B cell (primary cell): ENCODE measurements at regions of chr2 and their contacts with region 1.

Region 1: GRCh38 chr2:60439219-60439974 is 114.1 kb downstream of the BCL11A start:
- DNase-seq: peak; percentile 94
- ATAC-seq: peak; percentile 92
- H3K4me3 ChIP-seq: peak overlapping the region in 4 of 5 experiments; percentile 1 to 50 (median 31)
- H3K4me3 Mint-ChIP-seq: peak overlapping the region; percentile 88
- H3K27ac ChIP-seq: peak overlapping the region; percentile 88 to 90
- H3K27ac Mint-ChIP-seq: peak overlapping the region; percentile 100
- H3K4me1 ChIP-seq: peaks cover 75 to 81% of the 10 kb centered on the region in 2 donors
- H3K4me1 Mint-ChIP-seq: peaks cover 80% of the 10 kb centered on the region
- H3K27me3 ChIP-seq: no peaks in the 10 kb centered on the region
- H3K27me3 Mint-ChIP-seq: no peaks in the 10 kb centered on the region
- CTCF ChIP-seq: peak; percentile 84

Region 2: GRCh38 chr2:60213865-60214625 is 225.4 kb before region 1 on chr2:
- CTCF ChIA-PET with region 1: no interaction called
- POLR2A ChIA-PET with region 1: no interaction called
- intact Hi-C with region 1: no loop called
- DNase-seq: no peak
- ATAC-seq: no peak
- H3K4me3 ChIP-seq: no peak overlapping the region
- H3K4me3 Mint-ChIP-seq: no peak overlapping the region
- H3K27ac ChIP-seq: no peak overlapping the region
- H3K27ac Mint-ChIP-seq: no peak overlapping the region
- H3K4me1 ChIP-seq: no peaks in the 10 kb centered on the region
- H3K4me1 Mint-ChIP-seq: peaks cover 5% of the 10 kb centered on the region
- H3K27me3 ChIP-seq: no peaks in the 10 kb centered on the region
- H3K27me3 Mint-ChIP-seq: no peaks in the 10 kb centered on the region
- CTCF ChIP-seq: no peak

Region 3: GRCh38 chr2:60353406-60353800 is 86.0 kb before region 1 on chr2:
- CTCF ChIA-PET with region 1: interaction called, 42 read pairs
- POLR2A ChIA-PET with region 1: interaction called, 13 read pairs
- intact Hi-C with region 1: loop called (anchors 1 kb)
- DNase-seq: no peak
- ATAC-seq: peak; percentile 1
- H3K4me3 ChIP-seq: peak overlapping the region in 2 of 5 experiments; percentile 8 to 10
- H3K4me3 Mint-ChIP-seq: peak overlapping the region; percentile 54
- H3K27ac ChIP-seq: peak overlapping the region; percentile 95
- H3K27ac Mint-ChIP-seq: peak overlapping the region; percentile 99
- H3K4me1 ChIP-seq: peaks cover 98% of the 10 kb centered on the region in 2 donors
- H3K4me1 Mint-ChIP-seq: peaks cover 98% of the 10 kb centered on the region
- H3K27me3 ChIP-seq: no peaks in the 10 kb centered on the region
- H3K27me3 Mint-ChIP-seq: no peaks in the 10 kb centered on the region
- CTCF ChIP-seq: no peak

Region 4: DNA sequence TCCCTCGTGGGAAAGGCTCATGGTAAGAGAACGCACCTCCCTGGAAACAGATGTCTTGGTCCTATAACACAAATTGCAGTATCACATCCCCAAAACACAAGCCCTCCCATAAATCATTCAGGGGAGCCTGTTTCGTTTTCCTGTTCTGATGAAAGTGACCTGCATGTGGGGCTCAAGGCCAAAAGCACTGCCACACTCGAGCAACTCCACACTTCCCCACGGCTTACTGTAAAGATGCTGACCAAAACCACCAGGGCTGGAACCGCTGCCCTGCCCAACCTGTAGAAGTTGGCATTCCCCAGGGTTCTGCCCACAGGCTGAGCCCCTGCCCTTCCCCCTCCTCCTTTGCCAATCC is 25.6 kb before region 1 on chr2:
- CTCF ChIA-PET with region 1: interaction called, 4 read pairs
- POLR2A ChIA-PET with region 1: no interaction called
- intact Hi-C with region 1: loop called (anchors 1 kb)
- DNase-seq: peak; percentile 79
- ATAC-seq: peak; percentile 74
- H3K4me3 ChIP-seq: peak overlapping the region in 1 of 5 experiments; percentile 8
- H3K4me3 Mint-ChIP-seq: peak overlapping the region; percentile 20
- H3K27ac ChIP-seq: peak overlapping the region; percentile 79 to 81
- H3K27ac Mint-ChIP-seq: peak overlapping the region; percentile 94
- H3K4me1 ChIP-seq: peaks cover 73 to 76% of the 10 kb centered on the region in 2 donors
- H3K4me1 Mint-ChIP-seq: peaks cover 84% of the 10 kb centered on the region
- H3K27me3 ChIP-seq: no peaks in the 10 kb centered on the region
- H3K27me3 Mint-ChIP-seq: no peaks in the 10 kb centered on the region
- CTCF ChIP-seq: no peak

Region 5: DNA sequence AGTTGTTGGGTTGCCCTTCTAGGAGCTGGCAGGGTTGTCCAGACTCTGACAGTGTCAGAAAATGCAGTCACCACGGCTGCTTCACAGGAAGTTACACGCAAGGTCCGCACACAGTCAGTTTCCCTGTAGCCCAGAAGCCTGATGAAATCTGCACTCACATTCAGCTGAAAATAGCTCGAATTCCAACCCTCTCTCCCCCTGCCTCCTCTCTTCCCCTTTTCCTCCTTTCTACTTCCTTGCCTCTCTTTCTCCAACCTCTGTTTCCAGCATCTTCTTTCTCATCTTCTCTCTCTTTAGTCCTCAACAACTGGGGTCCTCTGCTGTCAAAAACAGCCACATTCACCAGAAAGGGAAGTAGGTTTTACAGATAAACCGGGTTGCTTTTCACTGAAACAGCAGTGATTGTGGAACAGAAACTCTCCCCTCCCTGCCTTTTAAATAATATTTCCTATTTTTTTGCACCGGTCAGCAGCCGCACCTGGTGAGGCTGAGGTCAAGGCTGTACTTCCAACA is 44.8 kb after region 1 on chr2:
- CTCF ChIA-PET with region 1: interaction called, 6 read pairs
- POLR2A ChIA-PET with region 1: no interaction called
- intact Hi-C with region 1: loop called (anchors 1 kb)
- DNase-seq: peak; percentile 76
- ATAC-seq: peak; percentile 68
- H3K4me3 ChIP-seq: peak overlapping the region; percentile 11 to 59 (median 48)
- H3K4me3 Mint-ChIP-seq: peak overlapping the region; percentile 79
- H3K27ac ChIP-seq: peak overlapping the region; percentile 76 to 93
- H3K27ac Mint-ChIP-seq: peak overlapping the region; percentile 88
- H3K4me1 ChIP-seq: peaks cover 99% of the 10 kb centered on the region in 2 donors
- H3K4me1 Mint-ChIP-seq: peaks cover 94% of the 10 kb centered on the region
- H3K27me3 ChIP-seq: no peaks in the 10 kb centered on the region
- H3K27me3 Mint-ChIP-seq: no peaks in the 10 kb centered on the region
- CTCF ChIP-seq: no peak

Region 6: DNA sequence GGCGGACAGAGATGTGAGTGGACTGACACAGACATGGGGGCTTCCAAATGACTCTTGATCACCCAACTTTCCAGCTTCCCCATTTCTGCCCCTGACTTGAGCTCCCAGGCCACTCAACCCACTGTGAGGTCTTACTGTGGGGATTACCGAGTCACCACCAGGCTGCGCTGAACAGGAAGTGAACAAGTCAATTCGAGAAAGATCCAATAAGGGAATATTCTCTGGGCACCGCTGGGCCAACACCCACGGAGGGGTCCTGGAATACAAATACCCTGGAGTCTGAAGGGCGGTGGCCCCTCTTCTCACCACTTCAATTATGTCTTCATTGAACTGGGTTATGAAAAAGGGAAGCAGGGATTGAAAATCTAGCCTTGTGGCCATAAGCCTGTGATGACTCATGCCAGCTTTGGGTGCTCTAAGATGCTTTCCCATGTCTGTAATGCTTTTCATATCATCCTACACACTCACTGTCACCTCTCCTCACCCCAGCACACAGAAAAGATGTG is 76.4 kb after region 1 on chr2:
- CTCF ChIA-PET with region 1: interaction called, 9 read pairs
- POLR2A ChIA-PET with region 1: interaction called, 4 read pairs
- intact Hi-C with region 1: loop called (anchors 2 kb)
- DNase-seq: peak; percentile 79
- ATAC-seq: peak; percentile 74
- H3K4me3 ChIP-seq: peak overlapping the region in 1 of 5 experiments; percentile 9
- H3K4me3 Mint-ChIP-seq: peak overlapping the region; percentile 75
- H3K27ac ChIP-seq: peak overlapping the region; percentile 64 to 85
- H3K27ac Mint-ChIP-seq: peak overlapping the region; percentile 86
- H3K4me1 ChIP-seq: peaks cover 96 to 98% of the 10 kb centered on the region in 2 donors
- H3K4me1 Mint-ChIP-seq: peaks cover 92% of the 10 kb centered on the region
- H3K27me3 ChIP-seq: no peaks in the 10 kb centered on the region
- H3K27me3 Mint-ChIP-seq: no peaks in the 10 kb centered on the region
- CTCF ChIP-seq: peak; percentile 15

Region 7: DNA sequence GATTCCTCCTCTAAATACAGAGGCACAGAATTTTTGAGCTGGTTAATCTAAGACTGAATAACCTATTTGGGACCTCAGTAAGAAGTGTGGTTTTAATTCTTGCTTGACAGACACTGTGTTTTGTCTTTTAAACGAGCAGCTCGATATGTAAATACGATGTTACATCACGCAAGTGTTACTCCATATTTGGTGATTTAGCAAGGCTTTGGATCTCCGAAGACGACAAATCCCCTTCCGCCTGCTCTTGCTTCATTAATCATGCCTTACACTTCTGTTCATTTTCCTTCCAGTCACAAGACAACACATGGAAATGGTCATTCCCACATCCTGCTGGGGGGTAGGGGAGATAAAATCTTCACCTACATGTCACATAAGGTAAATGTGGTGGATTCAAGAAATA is 104.7 kb after region 1 on chr2:
- CTCF ChIA-PET with region 1: interaction called, 46 read pairs
- POLR2A ChIA-PET with region 1: interaction called, 4 read pairs
- intact Hi-C with region 1: no loop called
- DNase-seq: peak; percentile 40
- ATAC-seq: peak; percentile 53
- H3K4me3 ChIP-seq: peak overlapping the region in 1 of 5 experiments; percentile 5
- H3K4me3 Mint-ChIP-seq: peak overlapping the region; percentile 97
- H3K27ac ChIP-seq: peak overlapping the region; percentile 65 to 91
- H3K27ac Mint-ChIP-seq: peak overlapping the region; percentile 91
- H3K4me1 ChIP-seq: peaks cover 82 to 97% of the 10 kb centered on the region in 2 donors
- H3K4me1 Mint-ChIP-seq: peaks cover 87% of the 10 kb centered on the region
- H3K27me3 ChIP-seq: no peaks in the 10 kb centered on the region
- H3K27me3 Mint-ChIP-seq: no peaks in the 10 kb centered on the region
- CTCF ChIP-seq: no peak